Activated CD4-positive, alpha-beta memory T cell treated with anti-CD3 and anti-CD28 coated beads, Interleukin-2, amount 10 ng/mL, durations not matched to agents 7 days and 5 days (primary cell): ENCODE measurements at regions of chr2 and their contacts with region 1.

Region 1: DNA sequence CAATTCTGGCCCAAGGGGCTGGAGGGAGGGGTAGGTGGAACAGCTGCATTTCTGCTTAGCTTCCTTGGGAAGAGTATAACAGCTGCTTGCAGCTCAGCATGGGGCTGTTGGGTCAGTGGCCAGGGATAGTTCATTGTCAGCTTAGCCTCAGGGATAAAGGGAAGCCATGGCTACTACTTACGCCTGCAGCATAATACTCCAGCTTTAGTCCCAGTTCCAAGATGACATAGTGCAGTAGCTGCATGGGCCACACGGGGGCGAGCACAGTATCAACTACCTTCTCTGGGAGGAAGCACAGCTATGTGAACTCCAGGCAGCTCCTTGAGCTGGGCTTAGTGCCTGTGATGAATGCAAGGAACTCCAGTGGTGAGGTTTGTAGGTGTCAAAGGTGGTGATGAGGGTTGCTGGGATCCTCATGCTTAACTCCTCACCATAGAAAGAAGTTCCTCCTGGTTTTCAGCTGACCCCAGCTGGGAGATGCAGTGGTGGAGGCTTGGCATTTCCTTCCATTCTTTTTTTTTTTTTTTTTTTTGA is 35.4 kb upstream of the RHOB start:
- DNase-seq: peak; percentile 78
- H3K4me3 Mint-ChIP-seq: no peak overlapping the region
- H3K27ac Mint-ChIP-seq: no peak overlapping the region
- H3K4me1 Mint-ChIP-seq: peaks cover 2% of the 10 kb centered on the region
- H3K27me3 Mint-ChIP-seq: peaks cover 53% of the 10 kb centered on the region

Region 2: GRCh38 chr2:20326163-20326780 is 85.2 kb before region 1 on chr2:
- CTCF ChIA-PET with region 1: interaction called, 12 read pairs
- POLR2A ChIA-PET with region 1: no interaction called
- DNase-seq: peak; percentile 55
- H3K4me3 Mint-ChIP-seq: no peak overlapping the region
- H3K27ac Mint-ChIP-seq: peak overlapping the region; percentile 6
- H3K4me1 Mint-ChIP-seq: peaks cover 61% of the 10 kb centered on the region
- H3K27me3 Mint-ChIP-seq: no peaks in the 10 kb centered on the region

Region 3: GRCh38 chr2:20378792-20379519 is 32.5 kb before region 1 on chr2:
- CTCF ChIA-PET with region 1: interaction called, 15 read pairs
- POLR2A ChIA-PET with region 1: no interaction called
- DNase-seq: no peak
- H3K4me3 Mint-ChIP-seq: no peak overlapping the region
- H3K27ac Mint-ChIP-seq: no peak overlapping the region
- H3K4me1 Mint-ChIP-seq: peaks cover 7% of the 10 kb centered on the region
- H3K27me3 Mint-ChIP-seq: peaks cover 11% of the 10 kb centered on the region

Region 4: GRCh38 chr2:20430461-20431300 is 19.3 kb after region 1 on chr2:
- CTCF ChIA-PET with region 1: interaction called, 106 read pairs
- POLR2A ChIA-PET with region 1: interaction called, 3 read pairs
- DNase-seq: peak; percentile 23
- H3K4me3 Mint-ChIP-seq: no peak overlapping the region
- H3K27ac Mint-ChIP-seq: no peak overlapping the region
- H3K4me1 Mint-ChIP-seq: peaks cover 34% of the 10 kb centered on the region
- H3K27me3 Mint-ChIP-seq: peaks cover 12% of the 10 kb centered on the region

Region 5: DNA sequence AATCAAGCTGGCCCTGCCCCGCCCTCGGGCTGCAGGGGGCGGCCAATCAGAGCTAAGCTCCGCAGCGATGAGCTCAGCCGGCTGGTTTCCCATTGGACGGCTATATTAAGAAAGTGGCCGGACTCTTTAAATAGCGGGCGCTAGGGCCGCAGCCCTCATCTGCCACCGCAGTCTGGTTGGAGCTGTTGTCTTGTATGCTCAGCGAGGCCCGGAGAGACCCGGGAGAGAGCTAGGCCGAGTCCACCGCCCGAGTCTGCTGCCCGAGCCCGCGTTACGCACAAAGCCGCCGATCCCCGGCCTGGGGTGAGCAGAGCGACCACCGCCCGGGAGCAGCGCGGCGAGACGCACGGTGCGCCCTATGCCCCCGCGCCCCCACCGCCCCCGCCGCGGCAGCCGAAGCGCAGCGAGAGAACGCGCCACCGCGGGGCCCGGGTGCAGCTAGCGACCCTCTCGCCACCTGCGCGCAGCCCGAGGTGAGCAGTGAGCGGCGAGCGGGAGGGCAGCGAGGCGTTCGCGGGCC is 35.5 kb after region 1 on chr2 and contains the start of gene RHOB:
- CTCF ChIA-PET with region 1: interaction called, 35 read pairs
- POLR2A ChIA-PET with region 1: interaction called, 7 read pairs
- DNase-seq: peak; percentile 93
- H3K4me3 Mint-ChIP-seq: peak within 1 kb of the TSS; percentile 74
- H3K27ac Mint-ChIP-seq: no peak within 1 kb of the TSS
- H3K4me1 Mint-ChIP-seq: peaks cover 10% of the 10 kb centered on the region
- H3K27me3 Mint-ChIP-seq: peaks cover 41% of the 10 kb centered on the region
- total RNA-seq, gene RHOB: 14.0 to 14.4 TPM

Region 6: GRCh38 chr2:20509766-20510495 is 98.5 kb after region 1 on chr2:
- CTCF ChIA-PET with region 1: no interaction called
- POLR2A ChIA-PET with region 1: no interaction called
- DNase-seq: no peak
- H3K4me3 Mint-ChIP-seq: no peak overlapping the region
- H3K27ac Mint-ChIP-seq: no peak overlapping the region
- H3K4me1 Mint-ChIP-seq: peaks cover 10% of the 10 kb centered on the region
- H3K27me3 Mint-ChIP-seq: no peaks in the 10 kb centered on the region

Region 7: GRCh38 chr2:20642055-20642971 is 230.9 kb after region 1 on chr2:
- CTCF ChIA-PET with region 1: interaction called, 79 read pairs
- POLR2A ChIA-PET with region 1: interaction called, 10 read pairs
- DNase-seq: peak; percentile 79
- H3K4me3 Mint-ChIP-seq: no peak overlapping the region
- H3K27ac Mint-ChIP-seq: no peak overlapping the region
- H3K4me1 Mint-ChIP-seq: no peaks in the 10 kb centered on the region
- H3K27me3 Mint-ChIP-seq: no peaks in the 10 kb centered on the region

Region 8: DNA sequence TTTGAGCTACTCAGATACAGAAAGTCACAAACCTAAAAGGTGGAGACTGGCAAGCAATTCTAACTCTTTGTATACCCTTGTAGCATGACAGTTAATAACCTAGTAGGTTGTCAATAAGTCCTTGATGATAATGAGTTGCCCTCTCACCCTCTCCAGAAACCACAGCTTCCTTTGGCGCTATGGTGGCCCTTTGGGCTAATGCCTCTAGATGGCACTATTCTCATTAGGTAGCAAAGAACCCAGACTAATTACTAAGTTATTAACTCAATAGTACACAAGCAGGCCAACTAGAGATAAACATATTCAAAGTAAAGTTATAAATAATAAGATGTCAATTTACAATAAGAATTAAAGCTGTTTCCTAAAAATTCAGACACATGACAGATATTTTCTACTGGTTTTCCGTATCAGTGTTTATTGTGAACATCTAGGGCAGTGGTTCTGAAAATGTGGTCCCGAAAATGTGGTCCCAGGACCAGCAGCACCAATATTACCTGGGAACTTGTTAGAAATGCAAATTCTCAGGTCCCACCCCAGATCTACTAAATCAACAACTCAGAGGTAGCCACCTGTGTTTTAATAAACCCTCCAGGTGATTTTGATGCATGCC is 370.3 kb after region 1 on chr2:
- CTCF ChIA-PET with region 1: no interaction called
- POLR2A ChIA-PET with region 1: no interaction called
- DNase-seq: peak; percentile 35
- H3K4me3 Mint-ChIP-seq: no peak overlapping the region
- H3K27ac Mint-ChIP-seq: no peak overlapping the region
- H3K4me1 Mint-ChIP-seq: peaks cover 2% of the 10 kb centered on the region
- H3K27me3 Mint-ChIP-seq: no peaks in the 10 kb centered on the region